Aorta (tissue), 5 donors: ENCODE measurements at regions of chr22 and their contacts with region 1.

Region 1: DNA sequence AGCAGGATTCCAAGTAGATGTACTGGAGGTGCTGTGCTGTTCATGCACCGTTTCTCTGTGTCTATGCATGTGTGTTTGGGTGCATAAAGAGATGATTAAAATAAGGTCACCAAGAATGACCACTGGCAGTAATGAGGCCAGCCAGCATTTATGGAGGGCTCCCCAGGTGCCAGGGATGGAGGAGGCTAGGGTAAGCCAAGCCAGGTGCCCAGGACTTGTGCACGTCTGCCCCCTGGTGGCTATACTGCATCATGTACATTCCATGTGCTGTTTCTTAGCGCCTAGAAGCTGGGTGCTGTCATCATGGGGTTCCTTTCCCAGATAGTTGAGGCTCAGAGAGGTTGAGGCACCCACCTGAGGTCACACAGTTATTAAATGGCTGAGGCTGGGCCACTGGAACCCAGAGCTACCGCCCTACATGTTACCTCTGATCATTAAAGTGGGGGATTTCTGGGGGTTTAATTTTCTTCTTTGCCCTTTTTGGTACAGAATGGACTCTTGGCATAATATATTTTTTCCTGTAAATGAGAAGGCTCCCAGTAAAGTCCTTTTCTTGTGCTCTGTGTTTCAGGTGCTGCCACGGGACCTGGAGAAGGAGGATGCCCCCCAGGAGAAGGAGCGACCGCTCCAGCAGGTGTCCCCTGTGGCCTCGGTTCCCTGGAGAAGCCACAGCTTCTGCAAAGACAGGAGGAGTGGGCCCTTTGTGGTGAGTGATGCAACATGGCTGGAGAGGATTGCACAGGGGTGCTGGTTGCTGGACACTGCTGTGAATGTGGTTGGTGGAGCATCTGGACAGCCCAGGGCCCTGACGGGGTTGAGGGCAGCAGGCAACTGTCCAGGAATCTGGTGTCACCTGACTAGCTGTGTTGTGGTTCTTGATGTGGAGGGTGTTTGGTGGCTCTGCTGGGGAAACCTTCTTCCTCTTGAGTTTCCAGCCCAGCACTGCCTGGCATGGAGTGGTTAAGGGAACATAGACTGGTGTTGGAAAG is 96.4 kb downstream of the KIAA1671 start:
- DNase-seq: peak; percentile 65 to 87
- ATAC-seq: peak; percentile 69
- H3K4me3 ChIP-seq: no peak overlapping the region
- H3K27ac ChIP-seq: no peak overlapping the region
- H3K4me1 ChIP-seq: no peaks in the 10 kb centered on the region
- H3K27me3 ChIP-seq: no peaks in the 10 kb centered on the region

Region 2: DNA sequence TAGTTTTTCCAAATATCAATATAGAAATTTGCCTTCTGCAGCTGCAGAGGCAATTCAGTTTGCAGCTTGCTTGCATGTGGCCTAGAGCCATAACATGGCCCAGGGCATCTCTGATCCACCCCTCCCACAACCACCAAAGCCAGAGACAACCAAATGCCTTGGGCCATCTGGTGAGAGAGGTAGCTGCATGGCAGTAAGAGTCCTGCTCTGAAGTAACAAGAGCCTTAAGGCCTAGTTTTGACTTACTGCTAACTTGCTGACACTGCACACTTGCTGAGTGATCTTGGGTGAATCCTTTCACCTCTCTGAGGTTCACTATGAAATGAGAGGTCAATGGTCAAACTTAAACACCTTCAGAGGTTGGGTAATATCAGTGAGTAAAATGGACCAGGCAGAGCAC is 783.2 kb before region 1 on chr22:
- intact Hi-C with region 1: no loop called
- DNase-seq: no peak
- ATAC-seq: no peak
- H3K4me3 ChIP-seq: no peak overlapping the region
- H3K27ac ChIP-seq: no peak overlapping the region
- H3K4me1 ChIP-seq: no peaks in the 10 kb centered on the region
- H3K27me3 ChIP-seq: no peaks in the 10 kb centered on the region

Region 3: GRCh38 chr22:24768537-24769374 is 280.2 kb before region 1 on chr22:
- intact Hi-C with region 1: loop called in 1 of 2 experiments (anchors 10 kb)
- DNase-seq: peak in 1 of 2 donors; percentile 56
- ATAC-seq: peak; percentile 74
- H3K4me3 ChIP-seq: no peak overlapping the region
- H3K27ac ChIP-seq: no peak overlapping the region
- H3K4me1 ChIP-seq: no peaks in the 10 kb centered on the region
- H3K27me3 ChIP-seq: no peaks in the 10 kb centered on the region

Region 4: GRCh38 chr22:24938741-24939341 is 110.1 kb before region 1 on chr22:
- intact Hi-C with region 1: loop called in 1 of 2 experiments (anchors 5 kb)
- DNase-seq: no peak
- ATAC-seq: no peak
- H3K4me3 ChIP-seq: no peak overlapping the region
- H3K27ac ChIP-seq: no peak overlapping the region
- H3K4me1 ChIP-seq: no peaks in the 10 kb centered on the region
- H3K27me3 ChIP-seq: no peaks in the 10 kb centered on the region

Region 5: DNA sequence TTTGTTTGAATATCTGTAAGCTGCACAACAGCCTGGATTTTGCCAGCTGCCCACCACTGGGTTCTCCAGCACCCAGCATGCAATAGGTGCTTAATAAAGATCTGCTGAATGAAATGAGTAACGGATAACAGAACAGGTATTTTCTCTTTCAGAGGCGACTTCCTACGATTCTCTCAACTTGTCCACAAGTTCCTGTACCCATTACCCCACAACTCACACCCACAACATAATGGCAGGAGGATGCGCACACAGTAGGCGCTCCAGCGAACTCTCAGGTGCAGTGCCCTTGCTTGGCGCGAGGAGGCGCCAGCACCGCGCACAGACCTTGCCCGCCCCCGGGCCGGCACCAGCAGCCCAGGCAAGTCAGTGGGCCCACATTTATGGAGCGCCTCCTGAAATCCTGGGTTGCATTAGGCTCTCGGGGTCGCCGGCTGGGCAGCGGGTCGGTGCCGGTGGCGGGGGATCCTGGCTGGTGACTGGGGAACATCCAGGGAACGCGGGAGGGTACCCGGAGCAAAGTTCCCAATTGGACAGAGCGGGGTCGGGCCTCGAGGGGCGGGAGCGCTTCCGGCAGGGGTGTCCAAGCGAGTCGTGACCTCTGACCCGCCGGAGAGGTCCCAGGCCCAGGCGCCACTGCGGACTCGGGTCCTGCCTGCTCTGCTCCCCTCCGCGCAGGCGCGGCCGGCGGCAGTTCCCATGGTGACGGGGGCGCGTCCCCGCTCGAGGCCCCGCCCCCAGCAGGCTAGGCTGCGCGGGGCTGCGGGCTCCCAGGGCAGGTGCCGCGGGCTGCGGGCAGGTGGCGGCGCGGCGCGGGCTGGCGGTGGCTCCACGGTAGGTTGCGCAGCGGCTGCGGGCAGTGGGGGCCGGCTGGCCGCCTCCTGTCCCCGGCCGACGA is 96.8 kb before region 1 on chr22 and contains the start of gene KIAA1671:
- intact Hi-C with region 1: loop called (anchors 1 to 2 kb)
- DNase-seq: peak; percentile 88 to 94
- ATAC-seq: peak; percentile 94
- H3K4me3 ChIP-seq: peak within 1 kb of the TSS; percentile 58 to 65
- H3K27ac ChIP-seq: no peak within 1 kb of the TSS
- H3K4me1 ChIP-seq: no peaks in the 10 kb centered on the region
- H3K27me3 ChIP-seq: no peaks in the 10 kb centered on the region
- total RNA-seq, gene KIAA1671: 57.0 to 93.3 TPM

Region 6: DNA sequence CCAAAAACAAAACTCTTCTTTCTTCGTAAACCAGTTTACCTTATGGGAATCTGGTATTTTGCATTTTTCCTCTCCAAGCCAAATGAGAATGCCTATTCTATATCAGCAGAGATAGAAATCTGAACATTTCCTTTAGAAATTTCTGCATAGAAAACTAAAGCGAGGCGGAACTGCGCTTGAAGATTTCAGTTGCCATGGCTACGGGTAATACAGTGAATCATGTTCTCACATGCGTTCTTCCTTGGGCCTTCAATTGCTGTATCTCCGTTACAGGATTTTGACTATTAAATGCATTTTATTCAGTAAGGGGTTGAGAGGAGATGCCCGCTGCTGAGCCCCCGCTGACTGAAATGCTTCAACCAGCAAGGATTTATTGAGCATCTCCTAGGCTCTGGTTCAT is 42.5 kb after region 1 on chr22:
- intact Hi-C with region 1: no loop called
- DNase-seq: no peak
- ATAC-seq: no peak
- H3K4me3 ChIP-seq: no peak overlapping the region
- H3K27ac ChIP-seq: peak overlapping the region in 1 of 2 donors; percentile 2
- H3K4me1 ChIP-seq: peaks cover 0 to 2% of the 10 kb centered on the region in 2 donors
- H3K27me3 ChIP-seq: no peaks in the 10 kb centered on the region

Region 7: DNA sequence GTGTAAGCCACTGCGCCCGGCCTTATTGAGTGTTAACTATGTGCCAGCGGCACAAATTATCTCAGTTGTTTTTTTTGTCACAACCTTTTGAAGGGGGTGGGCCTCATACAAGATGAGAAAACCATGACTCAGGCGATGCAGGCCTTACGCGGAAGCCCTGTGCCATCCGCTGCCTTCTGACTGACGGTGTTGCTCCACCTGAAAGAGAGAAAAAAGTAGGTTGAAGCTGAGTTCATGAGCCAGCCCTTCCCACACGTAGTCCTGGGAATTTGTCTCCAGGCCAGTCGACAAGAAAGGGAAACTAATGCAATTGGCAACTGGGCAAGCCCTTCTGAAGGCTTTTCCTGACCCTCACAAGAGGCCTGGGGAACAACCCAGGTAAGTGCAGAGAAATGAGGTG is 53.8 kb after region 1 on chr22:
- intact Hi-C with region 1: no loop called
- DNase-seq: no peak
- ATAC-seq: no peak
- H3K4me3 ChIP-seq: no peak overlapping the region
- H3K27ac ChIP-seq: peak overlapping the region in 1 of 2 donors; percentile 56
- H3K4me1 ChIP-seq: peaks cover 3 to 4% of the 10 kb centered on the region in 2 donors
- H3K27me3 ChIP-seq: no peaks in the 10 kb centered on the region

Region 8: GRCh38 chr22:25219948-25220442 is 171.0 kb after region 1 on chr22:
- intact Hi-C with region 1: no loop called
- DNase-seq: no peak
- ATAC-seq: no peak
- H3K4me3 ChIP-seq: no peak overlapping the region
- H3K27ac ChIP-seq: no peak overlapping the region
- H3K4me1 ChIP-seq: no peaks in the 10 kb centered on the region
- H3K27me3 ChIP-seq: no peaks in the 10 kb centered on the region